ENCODE measurements at regions of chr11 and their contacts with region 1.

Region 1: DNA sequence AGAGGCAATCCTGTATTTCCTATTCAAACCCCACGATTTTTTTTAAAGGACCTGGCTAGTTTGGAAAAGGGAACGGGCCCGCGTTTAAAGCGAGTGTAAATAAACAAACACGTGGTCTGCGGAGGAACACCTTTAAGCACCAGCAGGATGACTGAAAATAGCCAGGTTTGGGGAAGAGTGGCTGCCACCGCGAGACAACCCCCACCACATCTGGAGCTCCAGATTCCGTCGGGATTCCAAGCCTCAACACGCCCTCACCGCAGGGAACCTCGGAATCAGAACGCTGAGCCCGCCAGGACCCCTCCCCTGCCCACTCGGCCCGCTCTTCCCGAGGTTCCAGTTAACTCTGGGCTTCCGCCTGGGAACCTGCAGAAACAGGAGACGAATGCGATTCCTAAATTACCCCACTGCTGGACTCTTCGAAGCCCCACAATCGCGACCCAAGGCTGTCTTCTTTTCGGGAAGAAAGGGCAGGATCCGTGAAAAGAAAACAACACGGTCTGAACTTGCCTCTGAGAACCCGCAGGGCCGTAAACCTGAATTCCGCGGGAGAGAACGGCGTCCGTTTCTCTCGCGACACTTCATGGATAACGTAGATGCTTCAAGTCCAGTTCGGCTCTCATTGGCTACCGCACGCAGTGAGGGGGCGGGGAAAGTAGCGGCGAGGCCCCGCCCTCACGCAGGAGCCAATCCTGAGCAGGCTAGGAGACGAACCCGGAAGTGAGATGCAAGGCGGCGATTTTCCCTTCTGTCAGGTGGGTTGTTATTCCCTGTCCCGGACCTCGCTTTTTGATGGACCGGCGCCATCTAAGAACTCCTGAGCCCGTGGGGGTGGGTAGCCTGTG is at the starts of genes ANKRD49 and MRE11:
- DNase-seq: peak; percentile 94 to 98 (median 97)
- H3K4me3 ChIP-seq: peak within 1 kb of the TSS; percentile 92
- H3K27ac ChIP-seq: peak within 1 kb of the TSS; percentile 22 to 76
- H3K4me1 ChIP-seq: peaks cover 1% of the 10 kb centered on the region
- H3K27me3 ChIP-seq: no peaks in the 10 kb centered on the region
- CTCF ChIP-seq: no peak
- EP300 ChIP-seq: no peak
- POLR2A ChIP-seq: peak; percentile 63
- total RNA-seq, gene ANKRD49: 12.9 to 15.3 (median 15.0) TPM
- total RNA-seq, gene MRE11: 14.2 to 23.5 (median 20.1) TPM

Region 2: GRCh38 chr11:94128746-94129511 is 364.6 kb before region 1 on chr11 and contains the start of gene PANX1:
- intact Hi-C with region 1: loop called in 1 of 4 experiments (anchors 10 kb)
- DNase-seq: peak; percentile 70 to 87 (median 80)
- H3K4me3 ChIP-seq: peak within 1 kb of the TSS; percentile 79
- H3K27ac ChIP-seq: peak within 1 kb of the TSS; percentile 87 to 91
- H3K4me1 ChIP-seq: peaks cover 15% of the 10 kb centered on the region
- H3K27me3 ChIP-seq: no peaks in the 10 kb centered on the region
- CTCF ChIP-seq: no peak
- EP300 ChIP-seq: no peak
- POLR2A ChIP-seq: peak; percentile 18
- total RNA-seq, gene PANX1: 11.2 to 14.7 (median 12.7) TPM

Region 3: DNA sequence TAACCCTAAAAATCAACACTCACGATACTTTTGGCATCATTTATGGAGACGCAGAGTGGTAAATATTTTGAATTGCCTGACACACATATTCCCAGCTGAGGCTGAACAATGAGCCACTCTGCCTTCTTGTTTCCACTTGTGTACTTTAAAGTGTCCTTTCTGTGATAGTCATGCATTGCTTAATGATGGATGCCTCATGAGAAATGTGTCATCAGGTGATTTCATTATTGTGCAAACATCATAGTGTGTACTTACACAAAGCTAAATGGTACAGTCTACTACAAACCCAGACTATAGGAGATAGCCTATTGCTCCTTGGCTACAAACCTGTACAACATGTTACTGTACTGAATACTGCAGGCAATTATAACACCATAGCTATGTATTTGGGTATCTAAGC is 44.1 kb before region 1 on chr11:
- intact Hi-C with region 1: no loop called
- DNase-seq: no peak
- H3K4me3 ChIP-seq: no peak overlapping the region
- H3K27ac ChIP-seq: no peak overlapping the region
- H3K4me1 ChIP-seq: no peaks in the 10 kb centered on the region
- H3K27me3 ChIP-seq: no peaks in the 10 kb centered on the region
- CTCF ChIP-seq: no peak
- EP300 ChIP-seq: no peak
- POLR2A ChIP-seq: no peak

Region 4: DNA sequence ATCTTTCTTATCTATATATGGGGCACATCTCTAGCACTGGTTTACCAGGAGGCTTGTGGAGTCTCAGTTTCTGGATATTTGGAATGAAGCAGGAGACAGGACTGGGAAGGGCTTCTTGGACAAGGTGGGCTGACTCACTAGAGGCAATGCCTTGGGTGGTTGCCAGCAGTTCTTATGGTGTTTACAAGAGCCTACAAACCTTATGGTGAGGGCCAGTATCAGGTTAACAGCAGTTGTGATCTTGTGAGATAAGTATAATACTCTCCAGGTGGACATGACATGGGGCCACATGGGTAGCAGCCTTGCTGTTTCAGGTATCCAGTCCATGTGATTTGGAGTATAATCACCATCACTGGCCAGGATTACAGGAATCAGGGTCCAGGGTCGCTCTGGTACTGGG is 60.4 kb after region 1 on chr11:
- intact Hi-C with region 1: no loop called
- DNase-seq: no peak
- H3K4me3 ChIP-seq: no peak overlapping the region
- H3K27ac ChIP-seq: no peak overlapping the region
- H3K4me1 ChIP-seq: no peaks in the 10 kb centered on the region
- H3K27me3 ChIP-seq: no peaks in the 10 kb centered on the region
- CTCF ChIP-seq: no peak
- EP300 ChIP-seq: no peak
- POLR2A ChIP-seq: no peak

Region 5: GRCh38 chr11:94673951-94674491 is 180.5 kb after region 1 on chr11:
- intact Hi-C with region 1: no loop called
- DNase-seq: no peak
- H3K4me3 ChIP-seq: no peak overlapping the region
- H3K27ac ChIP-seq: no peak overlapping the region
- H3K4me1 ChIP-seq: no peaks in the 10 kb centered on the region
- H3K27me3 ChIP-seq: no peaks in the 10 kb centered on the region
- CTCF ChIP-seq: no peak
- EP300 ChIP-seq: no peak
- POLR2A ChIP-seq: no peak